ENCODE measurements at regions of chr3 and their contacts with region 1.

Region 1: GRCh38 chr3:15535732-15536131 is 14.2 kb upstream of the COLQ start:
- DNase-seq: peak; percentile 32
- H3K4me3 Mint-ChIP-seq: peak overlapping the region; percentile 60
- H3K27ac Mint-ChIP-seq: peak overlapping the region; percentile 75
- H3K4me1 Mint-ChIP-seq: peaks cover 55% of the 10 kb centered on the region
- H3K27me3 Mint-ChIP-seq: no peaks in the 10 kb centered on the region

Region 2: GRCh38 chr3:15354485-15354884 is 181.2 kb before region 1 on chr3:
- intact Hi-C with region 1: no loop called
- DNase-seq: no peak
- H3K4me3 Mint-ChIP-seq: no peak overlapping the region
- H3K27ac Mint-ChIP-seq: no peak overlapping the region
- H3K4me1 Mint-ChIP-seq: peaks cover 34% of the 10 kb centered on the region
- H3K27me3 Mint-ChIP-seq: no peaks in the 10 kb centered on the region

Region 3: DNA sequence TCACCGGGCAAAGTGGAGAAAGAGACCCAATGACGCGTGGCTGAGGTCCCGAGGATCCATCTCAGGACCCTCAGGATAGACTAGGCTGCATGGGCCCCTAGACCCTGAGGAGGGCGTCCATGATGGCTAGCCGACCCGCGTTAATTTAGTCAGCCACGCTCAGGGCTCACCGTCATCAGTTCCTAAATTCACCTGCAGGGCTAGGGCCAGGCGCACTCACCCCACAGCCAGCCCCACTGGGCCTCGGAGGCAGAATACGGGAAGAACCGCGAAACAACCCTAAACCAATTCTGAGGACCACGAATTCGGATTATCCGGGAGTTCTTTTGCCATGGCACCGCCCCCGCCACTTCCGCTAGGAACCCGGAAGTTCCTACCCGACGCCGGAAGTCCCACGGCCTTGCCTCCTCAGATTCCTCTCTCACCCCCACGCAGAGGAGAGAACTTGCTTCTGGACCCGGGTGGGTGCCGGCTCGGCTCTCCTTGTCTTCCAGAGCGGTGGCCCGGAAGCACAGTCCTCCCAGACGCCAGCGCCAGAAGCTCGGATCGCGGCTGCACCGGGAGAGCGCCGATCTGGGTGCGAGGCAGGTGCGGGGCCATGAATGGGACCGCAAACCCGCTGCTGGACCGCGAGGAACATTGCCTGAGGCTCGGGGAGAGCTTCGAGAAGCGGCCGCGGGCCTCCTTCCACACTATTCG is 108.4 kb before region 1 on chr3 and contains the starts of genes EAF1 and METTL6:
- intact Hi-C with region 1: loop called (anchors 1 kb)
- DNase-seq: peak; percentile 81
- H3K4me3 Mint-ChIP-seq: peak within 1 kb of the TSS; percentile 97
- H3K27ac Mint-ChIP-seq: peak within 1 kb of the TSS; percentile 96
- H3K4me1 Mint-ChIP-seq: peaks cover 61% of the 10 kb centered on the region
- H3K27me3 Mint-ChIP-seq: no peaks in the 10 kb centered on the region
- total RNA-seq, gene EAF1: 27.3 and 27.8 TPM in 2 replicates
- total RNA-seq, gene METTL6: 15.0 and 15.8 TPM in 2 replicates

Region 4: GRCh38 chr3:15500107-15500724 is 35.5 kb before region 1 on chr3:
- intact Hi-C with region 1: loop called (anchors 1 kb)
- DNase-seq: no peak
- H3K4me3 Mint-ChIP-seq: no peak overlapping the region
- H3K27ac Mint-ChIP-seq: peak overlapping the region; percentile 37
- H3K4me1 Mint-ChIP-seq: peaks cover 38% of the 10 kb centered on the region
- H3K27me3 Mint-ChIP-seq: peaks cover under 1% of the 10 kb centered on the region

Region 5: GRCh38 chr3:15557511-15557946 is 21.8 kb after region 1 on chr3:
- intact Hi-C with region 1: loop called (anchors 1 kb)
- DNase-seq: peak; percentile 60
- H3K4me3 Mint-ChIP-seq: no peak overlapping the region
- H3K27ac Mint-ChIP-seq: no peak overlapping the region
- H3K4me1 Mint-ChIP-seq: peaks cover 32% of the 10 kb centered on the region
- H3K27me3 Mint-ChIP-seq: no peaks in the 10 kb centered on the region

Region 6: GRCh38 chr3:15647611-15648167 is 112.0 kb after region 1 on chr3:
- intact Hi-C with region 1: loop called (anchors 2 kb)
- DNase-seq: peak; percentile 63
- H3K4me3 Mint-ChIP-seq: peak overlapping the region; percentile 60
- H3K27ac Mint-ChIP-seq: peak overlapping the region; percentile 57
- H3K4me1 Mint-ChIP-seq: peaks cover 52% of the 10 kb centered on the region
- H3K27me3 Mint-ChIP-seq: peaks cover 7% of the 10 kb centered on the region

Region 7: GRCh38 chr3:15753056-15753710 is 217.5 kb after region 1 on chr3:
- intact Hi-C with region 1: loop called (anchors 5 kb)
- DNase-seq: no peak
- H3K4me3 Mint-ChIP-seq: no peak overlapping the region
- H3K27ac Mint-ChIP-seq: no peak overlapping the region
- H3K4me1 Mint-ChIP-seq: peaks cover 16% of the 10 kb centered on the region
- H3K27me3 Mint-ChIP-seq: no peaks in the 10 kb centered on the region

Region 8: DNA sequence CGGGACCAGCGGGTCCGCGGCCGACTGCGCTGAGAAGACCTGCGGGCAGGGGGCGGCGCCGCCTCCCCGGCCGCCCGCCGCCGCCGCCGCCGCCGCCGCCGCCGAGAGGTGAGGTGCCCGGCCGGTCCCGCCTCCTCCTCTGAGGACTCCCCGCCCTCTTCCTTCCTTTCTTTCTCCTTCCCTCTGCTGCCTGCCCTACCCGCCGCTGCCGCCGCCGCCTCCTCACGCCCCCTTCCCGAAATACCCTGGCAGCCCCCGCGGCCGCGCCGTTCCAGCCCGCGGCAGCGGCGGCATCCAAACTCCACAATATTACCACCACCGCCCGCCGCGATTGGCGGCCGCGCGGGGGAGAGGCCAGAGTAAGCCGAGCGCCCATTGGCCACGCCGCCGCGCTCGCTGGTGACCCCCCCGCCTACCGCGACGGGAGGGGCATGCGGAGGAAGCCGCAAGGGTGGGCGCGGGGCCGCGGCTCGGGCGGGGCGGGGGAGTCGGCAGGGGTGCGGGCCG is 323.8 kb after region 1 on chr3:
- intact Hi-C with region 1: no loop called
- DNase-seq: peak; percentile 78
- H3K4me3 Mint-ChIP-seq: peak overlapping the region; percentile 92
- H3K27ac Mint-ChIP-seq: peak overlapping the region; percentile 91
- H3K4me1 Mint-ChIP-seq: peaks cover 33% of the 10 kb centered on the region
- H3K27me3 Mint-ChIP-seq: peaks cover 3% of the 10 kb centered on the region

Measured in activated T-helper 1 cell treated with anti-CD3 and anti-CD28 coated beads, Interleukin-12 subunit alpha, Interleukin-12 subunit beta, Interleukin-2, Interleukin-4 antibody, amounts not matched to agents 30 ng/mL and 10 ng/mL and 1 ng/mL, durations not matched to agents 14 hours and 24 hours and 36 hours (primary cell).